Breast epithelium (tissue), 4 donors: ENCODE measurements at regions of chr14 and their contacts with region 1.

Region 1: DNA sequence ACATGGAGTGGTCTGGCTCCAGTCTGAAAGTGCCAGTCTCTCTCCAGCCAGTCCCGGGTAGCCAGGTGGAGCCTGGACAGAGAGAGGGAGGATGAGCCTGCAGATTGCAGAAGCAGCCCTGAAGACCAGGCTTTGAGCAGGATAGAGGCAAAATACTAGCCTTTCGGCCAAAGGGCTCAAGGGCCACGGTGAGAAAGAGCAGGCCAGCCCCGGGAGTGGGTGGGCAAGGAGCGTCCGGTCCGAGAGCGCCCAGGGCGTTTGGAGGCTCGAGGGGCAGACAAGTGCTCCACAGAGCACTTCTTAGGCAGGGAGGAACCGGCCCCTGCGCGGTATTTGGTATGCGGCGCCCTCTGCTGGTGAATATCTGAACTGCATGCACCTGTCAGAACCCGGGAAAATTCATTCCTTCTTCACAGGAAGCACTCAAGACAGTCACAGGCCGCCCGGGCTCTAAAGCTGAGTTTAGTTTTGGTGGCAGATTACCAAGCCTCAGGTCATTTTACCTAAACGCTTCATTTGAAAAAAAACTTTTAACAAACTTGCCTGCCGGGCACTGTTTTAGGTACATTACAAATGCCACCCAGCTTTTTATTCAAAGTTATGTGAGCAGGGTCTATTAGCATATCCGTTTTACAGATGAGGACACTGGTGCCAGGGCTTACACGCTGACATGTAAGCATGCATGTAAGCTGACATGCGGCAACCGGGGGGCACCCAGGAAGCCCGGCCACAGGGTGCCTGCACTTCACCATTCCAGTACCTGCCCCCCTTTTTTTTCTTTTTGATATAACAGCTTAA is 21.0 kb upstream of the PSMC1 start:
- DNase-seq: peak in 1 of 2 donors; percentile 69
- H3K4me3 ChIP-seq: no peak overlapping the region
- H3K27ac ChIP-seq: no peak overlapping the region
- H3K4me1 ChIP-seq: no peaks in the 10 kb centered on the region
- H3K27me3 ChIP-seq: peaks cover 0 to 8% of the 10 kb centered on the region in 2 donors
- CTCF ChIP-seq: peak; percentile 59 to 73 (median 68)
- POLR2A ChIP-seq: no peak

Region 2: DNA sequence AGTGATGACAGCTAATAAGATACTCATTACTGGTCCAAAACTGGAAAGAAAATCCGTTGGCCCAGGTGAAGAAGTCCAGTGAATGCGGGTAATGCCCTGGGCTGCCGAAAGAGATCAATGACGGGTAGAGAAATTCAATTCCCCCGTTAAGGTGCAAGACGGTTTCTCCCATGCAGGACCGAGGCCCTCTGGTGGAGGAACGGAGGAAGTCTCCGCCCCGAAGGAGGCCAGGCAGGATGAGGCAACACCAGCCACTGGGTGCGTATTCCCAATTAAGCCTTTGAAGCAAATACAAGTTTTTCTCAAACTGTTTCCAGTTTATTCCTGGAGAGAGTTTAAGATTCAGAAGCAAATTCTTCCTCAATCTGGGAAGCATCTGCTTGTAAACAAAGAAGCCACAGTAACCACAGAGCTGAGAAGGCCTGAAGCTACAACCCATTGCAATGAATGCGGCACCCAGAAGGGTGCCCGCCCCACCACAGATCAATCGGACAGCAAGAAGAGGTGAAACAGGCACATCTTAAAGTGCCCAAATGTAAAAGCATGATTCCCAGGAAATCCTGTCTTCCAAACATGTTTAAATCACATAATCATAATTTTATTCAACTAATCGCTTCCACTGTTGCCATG is 462.3 kb after region 1 on chr14:
- intact Hi-C with region 1: loop called (anchors 5 kb)
- DNase-seq: peak; percentile 78 to 81
- H3K4me3 ChIP-seq: no peak overlapping the region
- H3K27ac ChIP-seq: peak overlapping the region; percentile 54 to 74
- H3K4me1 ChIP-seq: no peaks in the 10 kb centered on the region
- H3K27me3 ChIP-seq: no peaks in the 10 kb centered on the region
- CTCF ChIP-seq: peak; percentile 94 to 97 (median 97)
- POLR2A ChIP-seq: no peak